Activated CD4-positive, alpha-beta T cell treated with anti-CD3 and anti-CD28 coated beads for 36 hours (primary cell): ENCODE measurements at regions of chr16 and their contacts with region 1.

Region 1: DNA sequence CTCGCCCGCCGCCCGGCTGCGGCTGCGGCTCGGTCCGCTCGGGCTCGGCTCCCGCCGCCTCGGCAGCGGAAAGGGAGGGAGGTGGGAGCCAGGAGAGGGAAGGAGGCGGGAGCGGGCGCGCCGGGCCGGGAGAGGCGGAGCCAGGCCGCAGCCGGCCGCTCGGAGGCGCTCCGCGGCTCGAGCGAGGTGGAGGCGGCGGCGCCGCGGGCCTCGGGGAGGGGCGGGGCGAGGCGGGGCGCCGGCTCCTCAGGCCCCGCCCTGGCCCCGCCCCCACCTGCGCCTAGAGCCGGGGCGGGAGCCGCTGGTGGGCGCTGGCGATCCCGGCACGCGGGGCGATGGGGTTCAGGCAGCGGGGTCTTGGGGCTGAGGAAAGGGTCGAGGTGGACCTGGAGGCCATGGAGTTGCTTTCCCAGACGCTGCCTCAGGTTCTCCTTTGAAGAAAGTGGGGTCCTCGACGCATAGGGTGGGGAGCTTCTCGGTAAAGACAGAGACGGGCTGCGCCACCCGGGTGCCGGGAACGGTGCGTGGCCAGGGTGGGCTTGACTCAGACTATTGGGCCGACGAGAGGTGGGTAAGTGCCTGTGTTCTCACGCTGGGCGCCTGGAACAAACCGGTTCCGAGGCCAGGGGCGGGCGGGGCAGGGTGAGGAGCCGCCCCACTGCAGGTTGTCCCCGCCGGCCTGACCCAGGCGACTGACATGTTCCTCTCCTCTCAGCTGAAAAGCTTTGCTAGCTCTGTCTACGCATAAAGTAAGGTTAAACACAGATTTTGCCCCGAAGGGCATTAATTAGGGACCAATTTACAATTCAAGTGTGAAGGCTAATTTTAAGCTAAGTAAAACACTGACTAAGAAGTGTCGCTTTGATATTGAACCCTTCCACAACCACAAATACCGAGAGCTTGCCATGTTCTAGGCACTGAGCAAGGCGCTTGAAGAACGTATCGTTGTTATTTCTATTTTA is at the start of gene CMTM4:
- DNase-seq: peak; percentile 87
- ATAC-seq: peak; percentile 96
- H3K4me3 Mint-ChIP-seq: peak within 1 kb of the TSS; percentile 73
- H3K27ac Mint-ChIP-seq: no peak within 1 kb of the TSS
- H3K4me1 Mint-ChIP-seq: peaks cover 12% of the 10 kb centered on the region
- H3K27me3 Mint-ChIP-seq: peaks cover 10% of the 10 kb centered on the region
- total RNA-seq, gene CMTM4: 3.3 to 4.5 TPM

Region 2: DNA sequence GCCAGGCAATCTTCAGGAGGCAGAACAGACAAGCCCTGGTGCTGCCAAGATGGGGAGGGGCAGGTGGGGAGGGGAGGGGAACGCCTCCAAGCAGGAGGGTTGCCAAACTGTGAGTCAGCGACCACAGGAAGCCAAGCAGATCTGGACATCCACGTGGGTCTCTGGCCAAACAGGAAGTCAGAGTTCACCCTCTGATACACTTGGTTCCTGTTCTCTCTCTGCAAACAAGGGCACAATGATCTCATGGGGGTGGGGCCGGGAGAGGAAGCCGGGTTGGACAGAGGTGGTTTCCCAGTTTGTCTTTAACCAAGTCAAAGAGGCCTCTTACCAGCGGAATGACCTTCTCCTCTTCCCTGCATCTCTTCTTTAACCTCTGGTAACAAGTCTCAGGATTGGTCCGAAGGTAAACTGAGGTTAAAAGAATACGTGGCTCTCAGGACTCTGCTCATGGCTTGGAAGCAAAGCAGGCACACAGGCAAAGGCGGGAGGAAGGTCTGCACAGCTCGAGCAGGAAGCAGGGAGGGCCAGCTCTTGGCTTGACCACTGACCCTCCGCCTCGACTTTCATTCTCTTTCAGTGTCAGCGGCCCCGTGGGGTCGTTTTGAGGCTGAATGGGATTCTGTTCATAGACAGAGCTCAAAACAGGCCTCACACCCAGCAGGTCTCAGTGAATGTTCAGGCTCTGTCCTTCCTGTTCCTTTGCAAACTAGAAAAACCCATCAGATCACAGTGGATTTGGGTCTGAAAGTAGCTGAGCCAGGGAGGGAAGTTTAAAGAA is 180.0 kb before region 1 on chr16:
- CTCF ChIA-PET with region 1: no interaction called
- POLR2A ChIA-PET with region 1: no interaction called
- intact Hi-C with region 1: loop called in 1 of 2 experiments (anchors 2 kb)
- DNase-seq: peak; percentile 91
- ATAC-seq: peak; percentile 90
- H3K4me3 Mint-ChIP-seq: peak overlapping the region; percentile 65
- H3K27ac Mint-ChIP-seq: peak overlapping the region; percentile 92
- H3K4me1 Mint-ChIP-seq: peaks cover 66% of the 10 kb centered on the region
- H3K27me3 Mint-ChIP-seq: no peaks in the 10 kb centered on the region

Region 3: DNA sequence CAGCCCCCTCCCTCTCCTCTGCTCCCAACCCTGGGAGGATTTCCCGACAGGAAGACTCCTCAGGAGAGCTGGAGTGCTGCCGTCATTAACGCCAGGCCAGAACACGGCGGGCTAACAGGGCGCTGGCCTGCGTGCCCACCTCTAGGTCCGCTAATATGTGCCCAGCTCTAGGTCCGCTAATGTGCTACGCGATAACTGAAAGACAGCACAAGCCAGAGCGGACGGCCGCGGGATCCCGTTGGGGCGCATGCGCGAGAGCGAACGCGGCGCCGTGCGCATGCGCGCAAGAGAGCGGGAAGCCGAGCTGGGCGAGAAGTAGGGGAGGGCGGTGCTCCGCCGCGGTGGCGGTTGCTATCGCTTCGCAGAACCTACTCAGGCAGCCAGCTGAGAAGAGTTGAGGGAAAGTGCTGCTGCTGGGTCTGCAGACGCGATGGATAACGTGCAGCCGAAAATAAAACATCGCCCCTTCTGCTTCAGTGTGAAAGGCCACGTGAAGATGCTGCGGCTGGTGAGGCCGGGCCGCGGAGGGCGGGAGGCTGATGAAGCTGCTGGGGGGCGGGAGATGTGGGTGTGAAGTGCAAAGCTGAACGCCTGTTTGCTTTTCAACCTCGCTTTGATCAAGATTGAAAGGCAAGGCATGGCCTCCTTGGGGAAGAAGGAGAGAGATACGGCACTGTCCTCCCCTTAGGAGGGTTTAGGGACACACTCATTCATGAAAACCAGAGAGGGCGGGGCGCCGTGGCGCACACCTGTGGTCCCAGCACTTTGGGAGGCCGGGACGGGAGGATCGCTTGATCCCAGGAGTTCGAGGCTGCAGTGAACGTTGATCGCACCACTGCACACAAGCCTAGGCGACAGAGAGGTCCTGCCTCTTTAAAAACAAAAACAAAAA is 144.4 kb before region 1 on chr16 and contains the start of gene CKLF:
- CTCF ChIA-PET with region 1: interaction called, 3 read pairs
- POLR2A ChIA-PET with region 1: interaction called, 3 read pairs
- intact Hi-C with region 1: loop called in 1 of 2 experiments (anchors 2 kb)
- DNase-seq: peak; percentile 94
- ATAC-seq: peak; percentile 73
- H3K4me3 Mint-ChIP-seq: peak within 1 kb of the TSS; percentile 97
- H3K27ac Mint-ChIP-seq: peak within 1 kb of the TSS; percentile 94
- H3K4me1 Mint-ChIP-seq: peaks cover 76% of the 10 kb centered on the region
- H3K27me3 Mint-ChIP-seq: no peaks in the 10 kb centered on the region
- total RNA-seq, gene CKLF: 93.5 to 122 TPM

Region 4: GRCh38 chr16:66650707-66651473 is 46.1 kb before region 1 on chr16:
- CTCF ChIA-PET with region 1: interaction called, 10 read pairs
- POLR2A ChIA-PET with region 1: no interaction called
- intact Hi-C with region 1: loop called in 1 of 2 experiments (anchors 1 kb)
- DNase-seq: peak; percentile 89
- ATAC-seq: peak; percentile 100
- H3K4me3 Mint-ChIP-seq: peak overlapping the region; percentile 18
- H3K27ac Mint-ChIP-seq: peak overlapping the region; percentile 26
- H3K4me1 Mint-ChIP-seq: peaks cover 10% of the 10 kb centered on the region
- H3K27me3 Mint-ChIP-seq: no peaks in the 10 kb centered on the region

Region 5: GRCh38 chr16:66751303-66751991 is 54.5 kb after region 1 on chr16 and contains the start of gene DYNC1LI2:
- CTCF ChIA-PET with region 1: interaction called, 3 read pairs
- POLR2A ChIA-PET with region 1: no interaction called
- intact Hi-C with region 1: loop called in 1 of 2 experiments (anchors 1 kb)
- DNase-seq: peak; percentile 89
- ATAC-seq: peak; percentile 93
- H3K4me3 Mint-ChIP-seq: peak within 1 kb of the TSS; percentile 81
- H3K27ac Mint-ChIP-seq: peak within 1 kb of the TSS; percentile 80
- H3K4me1 Mint-ChIP-seq: peaks cover 38% of the 10 kb centered on the region
- H3K27me3 Mint-ChIP-seq: peaks cover 9% of the 10 kb centered on the region
- total RNA-seq, gene DYNC1LI2: 32.3 to 35.7 TPM

Region 6: DNA sequence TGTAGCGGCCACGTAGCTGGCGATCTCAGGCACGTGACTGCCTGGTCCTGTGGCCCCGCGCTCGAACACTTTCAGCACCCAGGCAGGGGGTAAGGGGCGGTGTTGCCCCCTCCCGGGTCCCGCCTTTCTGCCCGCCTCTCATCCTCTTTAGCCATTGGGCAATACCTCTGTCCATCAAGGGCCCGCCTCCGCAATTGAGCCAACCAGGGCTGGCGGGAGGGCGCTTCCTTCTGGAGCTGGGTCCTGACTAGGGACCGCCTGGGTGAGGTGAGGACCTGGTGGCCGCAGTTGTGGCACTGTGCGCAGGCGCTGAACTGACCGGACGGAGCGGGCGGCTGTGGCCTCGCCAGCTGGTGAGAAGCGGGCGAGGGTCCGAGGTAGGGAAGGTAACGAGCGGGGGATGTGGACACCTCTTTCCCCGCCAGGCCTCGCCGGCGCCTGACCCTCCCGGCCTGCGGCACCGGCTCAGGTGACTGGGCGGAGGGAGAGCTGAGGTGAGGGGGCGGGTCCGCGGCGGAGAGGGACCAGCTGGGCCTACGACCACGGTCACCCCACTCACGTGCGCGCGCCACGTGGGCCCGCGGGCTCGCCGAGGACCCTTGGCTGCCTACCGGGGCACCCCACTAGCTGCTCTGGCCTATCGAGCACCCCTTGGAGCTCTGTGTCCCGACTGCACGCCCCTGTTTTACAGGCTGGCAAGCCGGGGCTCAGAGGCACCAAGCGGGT is 183.5 kb after region 1 on chr16 and contains the start of gene PDP2:
- CTCF ChIA-PET with region 1: no interaction called
- POLR2A ChIA-PET with region 1: no interaction called
- intact Hi-C with region 1: loop called in 1 of 2 experiments (anchors 1 kb)
- DNase-seq: peak; percentile 95
- ATAC-seq: peak; percentile 90
- H3K4me3 Mint-ChIP-seq: peak within 1 kb of the TSS; percentile 90
- H3K27ac Mint-ChIP-seq: peak within 1 kb of the TSS; percentile 96
- H3K4me1 Mint-ChIP-seq: peaks cover 48% of the 10 kb centered on the region
- H3K27me3 Mint-ChIP-seq: no peaks in the 10 kb centered on the region
- total RNA-seq, gene PDP2: 27.8 to 36.6 TPM

Region 7: GRCh38 chr16:66890796-66891195 is 193.8 kb after region 1 on chr16:
- CTCF ChIA-PET with region 1: no interaction called
- POLR2A ChIA-PET with region 1: no interaction called
- intact Hi-C with region 1: no loop called
- DNase-seq: no peak
- ATAC-seq: no peak
- H3K4me3 Mint-ChIP-seq: no peak overlapping the region
- H3K27ac Mint-ChIP-seq: peak overlapping the region; percentile 18
- H3K4me1 Mint-ChIP-seq: peaks cover 29% of the 10 kb centered on the region
- H3K27me3 Mint-ChIP-seq: no peaks in the 10 kb centered on the region

Region 8: GRCh38 chr16:66934153-66934838 is 237.3 kb after region 1 on chr16 and contains the start of gene CIAO2B:
- CTCF ChIA-PET with region 1: no interaction called
- POLR2A ChIA-PET with region 1: no interaction called
- intact Hi-C with region 1: loop called in 1 of 2 experiments (anchors 1 kb)
- DNase-seq: peak; percentile 93
- ATAC-seq: peak; percentile 84
- H3K4me3 Mint-ChIP-seq: peak within 1 kb of the TSS; percentile 99
- H3K27ac Mint-ChIP-seq: peak within 1 kb of the TSS; percentile 96
- H3K4me1 Mint-ChIP-seq: peaks cover 57% of the 10 kb centered on the region
- H3K27me3 Mint-ChIP-seq: no peaks in the 10 kb centered on the region
- total RNA-seq, gene CIAO2B: 171 to 186 TPM